ENCODE measurements at regions of chr1 and their contacts with region 1.

Region 1: DNA sequence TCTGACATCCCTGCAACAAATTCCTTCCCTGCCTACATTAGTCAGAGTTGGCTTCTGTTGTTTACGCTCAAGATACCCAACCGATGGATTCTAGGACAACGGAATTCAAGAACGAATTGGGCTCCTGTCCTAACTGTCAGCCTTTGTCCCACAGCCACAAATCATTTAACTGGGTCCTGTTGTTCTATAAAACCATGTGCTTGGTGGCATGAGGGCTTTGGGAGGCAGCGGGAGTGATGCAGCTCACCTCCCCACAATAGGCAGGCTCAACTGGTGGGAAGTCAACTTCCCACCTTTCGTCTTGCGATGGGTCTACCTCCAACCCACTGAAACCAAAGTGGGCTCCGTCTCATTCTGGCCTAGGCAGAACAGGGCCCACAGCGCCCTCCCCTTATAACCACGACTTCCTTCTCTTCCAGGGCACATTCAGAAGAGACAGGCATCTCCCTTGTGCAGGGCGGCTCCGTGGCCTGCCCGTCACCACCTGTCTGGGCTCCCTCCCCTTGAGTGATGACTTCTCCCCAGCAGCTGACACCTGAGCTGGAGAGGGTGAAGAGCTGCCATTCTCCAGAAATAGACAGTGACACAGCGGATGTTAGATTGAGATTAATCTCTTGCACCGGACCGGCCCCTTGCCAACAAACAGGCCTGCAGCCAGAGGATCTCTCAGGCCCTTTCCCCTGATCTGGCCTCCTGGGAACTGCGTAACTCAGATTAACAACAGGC is 26.5 kb downstream of the LRRC38 start:
- DNase-seq: peak; percentile 82 to 94
- ATAC-seq: peak; percentile 96 to 97 (median 97)
- H3K4me3 ChIP-seq: no peak overlapping the region
- H3K27ac ChIP-seq: peak overlapping the region; percentile 79
- H3K4me1 ChIP-seq: peaks cover 33% of the 10 kb centered on the region
- H3K27me3 ChIP-seq: no peaks in the 10 kb centered on the region
- CTCF ChIP-seq: no peak

Region 2: DNA sequence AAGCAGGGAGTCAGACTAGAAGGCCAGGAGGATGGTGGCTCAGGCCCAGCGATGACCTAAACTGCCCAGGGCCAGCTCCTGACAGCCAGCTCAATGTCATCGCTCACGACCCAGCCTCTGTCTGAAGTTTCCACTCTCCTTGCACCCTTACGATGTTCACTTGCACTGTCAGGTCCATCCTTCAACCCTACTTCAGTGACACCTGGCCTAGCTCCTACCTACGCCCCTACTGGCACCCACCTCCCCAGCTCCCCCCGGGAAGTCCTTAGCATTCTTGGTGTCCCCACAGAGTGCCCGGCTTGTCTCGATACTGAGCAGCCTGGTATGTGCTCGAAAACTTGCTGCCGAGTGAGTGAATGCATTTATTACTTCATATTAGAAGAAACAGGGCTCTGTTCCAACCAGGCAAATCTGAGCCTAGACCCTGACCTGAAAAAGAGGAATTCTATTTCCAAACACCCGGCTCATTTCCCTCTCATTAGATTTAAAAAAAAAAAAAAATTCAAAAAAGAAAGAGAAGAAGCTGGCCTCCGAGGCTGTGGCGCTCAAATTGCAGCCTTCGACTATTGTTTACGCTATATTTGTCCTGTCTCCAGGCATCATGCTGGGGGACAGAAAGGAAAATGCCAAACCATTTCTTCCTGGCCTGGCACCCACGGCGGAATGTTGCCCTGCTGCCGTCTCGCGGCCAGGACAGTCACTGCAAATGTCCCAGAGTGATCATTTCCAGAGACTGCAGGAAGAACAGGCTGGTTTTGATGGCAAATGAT is 56.3 kb after region 1 on chr1:
- intact Hi-C with region 1: loop called in 1 of 2 experiments (anchors 5 kb)
- DNase-seq: peak; percentile 70 to 87
- ATAC-seq: peak; percentile 76 to 88 (median 80)
- H3K4me3 ChIP-seq: peak overlapping the region; percentile 28
- H3K27ac ChIP-seq: peak overlapping the region; percentile 80
- H3K4me1 ChIP-seq: peaks cover 20% of the 10 kb centered on the region
- H3K27me3 ChIP-seq: no peaks in the 10 kb centered on the region
- CTCF ChIP-seq: peak; percentile 67

Measured in psoas muscle (tissue), 8 donors.